ENCODE measurements at regions of chr6 and their contacts with region 1.

Region 1: GRCh38 chr6:170371588-170371987 is 65.0 kb downstream of the FAM120B start:
- DNase-seq: no peak
- H3K4me3 ChIP-seq: no peak overlapping the region
- H3K27ac ChIP-seq: no peak overlapping the region
- H3K27me3 ChIP-seq: no peaks in the 10 kb centered on the region
- CTCF ChIP-seq: no peak

Region 2: GRCh38 chr6:170344631-170345575 is 26.7 kb before region 1 on chr6:
- CTCF ChIA-PET with region 1: no interaction called
- POLR2A ChIA-PET with region 1: no interaction called
- DNase-seq: no peak
- H3K4me3 ChIP-seq: no peak overlapping the region
- H3K27ac ChIP-seq: no peak overlapping the region
- H3K27me3 ChIP-seq: no peaks in the 10 kb centered on the region
- CTCF ChIP-seq: no peak

Region 3: GRCh38 chr6:170360476-170360875 is 11.1 kb before region 1 on chr6:
- CTCF ChIA-PET with region 1: no interaction called
- POLR2A ChIA-PET with region 1: no interaction called
- DNase-seq: no peak
- H3K4me3 ChIP-seq: no peak overlapping the region
- H3K27ac ChIP-seq: no peak overlapping the region
- H3K27me3 ChIP-seq: no peaks in the 10 kb centered on the region
- CTCF ChIP-seq: no peak

Region 4: GRCh38 chr6:170516783-170517616 is 145.4 kb after region 1 on chr6:
- CTCF ChIA-PET with region 1: interaction called, 10 read pairs
- POLR2A ChIA-PET with region 1: no interaction called
- DNase-seq: peak; percentile 52
- H3K4me3 ChIP-seq: no peak overlapping the region
- H3K27ac ChIP-seq: no peak overlapping the region
- H3K27me3 ChIP-seq: no peaks in the 10 kb centered on the region
- CTCF ChIP-seq: peak; percentile 93

Region 5: DNA sequence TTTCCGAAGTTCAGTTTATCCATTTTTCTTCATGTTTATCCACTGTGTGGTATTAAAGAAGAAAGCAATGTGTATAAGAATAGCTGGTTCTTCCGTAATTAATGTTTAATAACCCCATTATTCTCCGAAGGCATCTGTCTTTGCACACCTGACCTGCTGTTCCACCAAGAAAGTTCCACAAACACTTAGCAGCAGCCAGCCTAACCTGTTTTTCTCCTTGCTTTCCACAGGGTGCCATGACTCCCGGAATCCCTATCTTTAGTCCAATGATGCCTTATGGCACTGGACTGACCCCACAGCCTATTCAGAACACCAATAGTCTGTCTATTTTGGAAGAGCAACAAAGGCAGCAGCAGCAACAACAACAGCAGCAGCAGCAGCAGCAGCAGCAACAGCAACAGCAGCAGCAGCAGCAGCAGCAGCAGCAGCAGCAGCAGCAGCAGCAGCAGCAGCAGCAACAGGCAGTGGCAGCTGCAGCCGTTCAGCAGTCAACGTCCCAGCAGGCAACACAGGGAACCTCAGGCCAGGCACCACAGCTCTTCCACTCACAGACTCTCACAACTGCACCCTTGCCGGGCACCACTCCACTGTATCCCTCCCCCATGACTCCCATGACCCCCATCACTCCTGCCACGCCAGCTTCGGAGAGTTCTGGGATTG is 190.1 kb after region 1 on chr6:
- CTCF ChIA-PET with region 1: no interaction called
- POLR2A ChIA-PET with region 1: no interaction called
- DNase-seq: no peak
- H3K4me3 ChIP-seq: no peak overlapping the region
- H3K27ac ChIP-seq: no peak overlapping the region
- H3K27me3 ChIP-seq: no peaks in the 10 kb centered on the region
- CTCF ChIP-seq: no peak